Heart left ventricle (tissue), 16 donors: ENCODE measurements at regions of chr10 and their contacts with region 1.

Region 1: DNA sequence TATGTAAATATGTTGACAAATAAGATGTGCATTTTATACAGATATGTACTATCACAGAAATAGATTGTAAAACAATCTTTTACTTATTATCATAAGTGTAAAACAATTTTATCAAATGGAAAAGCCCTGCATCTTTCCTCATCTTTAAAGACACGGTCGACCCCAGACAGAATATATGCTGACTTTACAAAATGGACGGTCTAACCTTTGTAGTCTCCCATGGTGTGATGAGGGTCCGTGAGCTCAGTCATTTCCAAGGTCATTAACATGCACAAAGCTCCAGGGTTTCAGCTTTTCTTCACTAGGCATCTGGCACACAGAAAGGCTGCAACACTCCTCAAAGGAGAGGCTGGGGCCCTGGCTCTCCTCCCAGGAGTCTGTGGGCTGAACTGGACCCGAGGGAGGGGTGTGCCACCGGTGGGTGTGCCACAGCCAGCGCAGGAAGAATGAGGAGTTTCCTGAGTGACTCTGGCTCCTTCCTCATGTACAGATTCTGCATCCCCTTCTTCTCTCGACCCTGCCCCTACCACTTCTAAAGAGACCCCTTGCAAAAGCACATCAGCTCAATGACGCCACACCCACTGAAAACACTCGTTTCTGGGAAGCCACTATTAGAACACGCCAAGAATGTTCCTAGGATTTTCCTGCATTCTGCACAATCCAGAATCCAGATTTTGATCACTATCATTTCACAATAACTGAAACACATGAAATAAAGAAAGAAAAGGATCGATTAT is 26.2 kb upstream of the ABLIM1 start:
- DNase-seq: peak; percentile 48 to 79 (median 72)
- ATAC-seq: peak; percentile 38 to 71 (median 64)
- H3K4me3 ChIP-seq: peak overlapping the region; percentile 21 to 61 (median 54)
- H3K27ac ChIP-seq: peak overlapping the region; percentile 77 to 94 (median 85)
- H3K4me1 ChIP-seq: peaks cover 16 to 87% (median 51%) of the 10 kb centered on the region in 12 donors
- H3K27me3 ChIP-seq: no peaks in the 10 kb centered on the region
- CTCF ChIP-seq: no peak
- POLR2A ChIP-seq: peak in 1 of 2 donors; percentile 21

Region 2: GRCh38 chr10:114631666-114632417 is 52.4 kb before region 1 on chr10:
- intact Hi-C with region 1: loop called in 8 of 10 experiments (anchors 2 to 10 kb)
- DNase-seq: peak; percentile 52 to 71 (median 67)
- ATAC-seq: peak; percentile 17 to 68 (median 56)
- H3K4me3 ChIP-seq: peak overlapping the region; percentile 40 to 85 (median 68)
- H3K27ac ChIP-seq: peak overlapping the region; percentile 80 to 96 (median 90)
- H3K4me1 ChIP-seq: peaks cover 0 to 87% (median 50%) of the 10 kb centered on the region in 12 donors
- H3K27me3 ChIP-seq: peaks cover 0 to 21% (median 0%) of the 10 kb centered on the region in 9 donors
- CTCF ChIP-seq: no peak
- POLR2A ChIP-seq: peak in 1 of 2 donors; percentile 49

Region 3: DNA sequence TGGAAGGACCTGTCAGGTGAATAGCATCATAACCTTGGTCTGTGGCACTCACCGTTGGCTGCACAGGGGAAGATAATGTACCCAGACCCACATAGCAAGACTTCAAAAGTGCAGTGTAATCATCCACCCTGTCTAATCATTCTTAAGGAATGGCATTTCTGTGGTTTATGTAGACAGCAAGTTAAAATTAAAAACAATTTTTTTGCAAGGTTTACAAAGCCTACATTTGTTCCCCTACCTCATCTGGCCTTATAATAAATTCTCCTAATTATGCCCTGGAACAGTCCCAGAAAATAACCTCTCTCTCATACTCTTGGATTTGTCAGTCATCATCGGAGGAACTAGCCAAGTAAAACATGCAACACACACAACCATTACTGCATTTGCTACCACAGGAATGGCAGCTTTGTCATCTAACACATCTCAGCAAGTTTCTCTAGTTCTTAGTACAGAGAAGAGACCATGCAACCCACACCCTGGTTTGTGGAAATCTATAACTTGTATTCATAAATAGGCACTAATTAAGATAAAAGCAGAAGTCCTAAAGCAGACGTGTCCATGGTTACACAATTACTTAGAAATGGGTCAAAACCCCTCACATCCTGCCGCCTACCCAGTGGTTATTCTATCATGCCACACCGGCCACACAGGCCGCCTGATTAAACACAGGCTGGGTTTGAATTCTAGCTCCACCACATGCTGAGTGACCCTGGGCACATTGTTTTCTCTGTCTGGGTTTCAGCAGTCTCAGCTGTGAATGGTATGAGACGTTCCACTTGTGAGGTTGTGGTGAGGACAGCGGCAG is 45.2 kb before region 1 on chr10:
- intact Hi-C with region 1: loop called in 7 of 10 experiments (anchors 5 to 10 kb)
- DNase-seq: no peak
- ATAC-seq: peak in 3 of 4 donors; percentile 27 to 44 (median 33)
- H3K4me3 ChIP-seq: no peak overlapping the region
- H3K27ac ChIP-seq: peak overlapping the region in 10 of 12 donors; percentile 5 to 55 (median 38)
- H3K4me1 ChIP-seq: peaks cover 0 to 79% (median 38%) of the 10 kb centered on the region in 12 donors
- H3K27me3 ChIP-seq: no peaks in the 10 kb centered on the region
- CTCF ChIP-seq: no peak
- POLR2A ChIP-seq: no peak

Region 4: DNA sequence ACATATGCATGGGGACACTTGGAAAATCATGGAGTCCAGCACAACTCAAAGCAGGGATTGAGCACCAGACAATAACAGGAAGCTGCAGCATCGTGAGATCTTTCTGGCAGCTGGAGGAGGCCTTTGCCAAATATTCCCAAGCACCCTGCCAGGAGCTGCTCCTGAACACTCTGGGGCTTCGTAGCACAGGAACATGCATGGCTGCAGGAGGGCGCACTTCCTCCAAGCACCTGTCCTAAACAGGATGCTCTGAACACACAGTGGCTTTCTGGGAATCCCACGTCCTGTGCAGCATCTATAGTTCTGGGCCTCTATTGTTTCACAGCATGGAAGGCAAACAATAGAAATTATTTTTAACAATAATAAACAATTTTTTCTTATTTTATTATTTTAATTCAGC is 30.3 kb before region 1 on chr10:
- intact Hi-C with region 1: loop called in 2 of 10 experiments (anchors 5 kb)
- DNase-seq: peak; percentile 62 to 70 (median 67)
- ATAC-seq: peak; percentile 45 to 80 (median 48)
- H3K4me3 ChIP-seq: no peak overlapping the region
- H3K27ac ChIP-seq: peak overlapping the region in 11 of 12 donors; percentile 54 to 93 (median 78)
- H3K4me1 ChIP-seq: peaks cover 14 to 100% (median 67%) of the 10 kb centered on the region in 12 donors
- H3K27me3 ChIP-seq: no peaks in the 10 kb centered on the region
- CTCF ChIP-seq: peak in 3 of 12 donors; percentile 9 to 25 (median 17)
- POLR2A ChIP-seq: no peak